ENCODE measurements at regions of chr18 and their contacts with region 1.

Region 1: DNA sequence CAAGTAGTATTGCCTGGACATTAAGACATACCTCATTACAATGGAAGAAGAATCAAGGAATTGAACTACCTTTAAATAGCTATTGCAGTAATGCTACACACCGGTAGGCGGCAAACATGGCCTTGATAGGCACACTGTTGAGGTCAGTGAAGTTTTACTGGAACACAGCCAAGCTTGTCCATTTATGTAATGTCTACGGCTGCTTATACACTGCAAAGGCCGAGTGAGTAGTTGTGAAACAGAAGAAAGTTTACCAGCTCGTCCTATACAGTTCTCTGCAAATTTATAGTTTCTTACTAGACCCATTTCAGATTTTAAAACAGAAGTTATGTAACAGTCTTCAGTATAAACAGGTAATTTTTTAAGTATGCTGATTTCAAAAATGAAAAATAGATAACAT is 38.8 kb downstream of the PPP4R1 start:
- DNase-seq: peak; percentile 84
- H3K4me3 Mint-ChIP-seq: no peak overlapping the region
- H3K27ac Mint-ChIP-seq: peak overlapping the region; percentile 42
- H3K4me1 Mint-ChIP-seq: peaks cover 12% of the 10 kb centered on the region
- H3K27me3 Mint-ChIP-seq: no peaks in the 10 kb centered on the region
- CTCF ChIP-seq: peak; percentile 84

Region 2: DNA sequence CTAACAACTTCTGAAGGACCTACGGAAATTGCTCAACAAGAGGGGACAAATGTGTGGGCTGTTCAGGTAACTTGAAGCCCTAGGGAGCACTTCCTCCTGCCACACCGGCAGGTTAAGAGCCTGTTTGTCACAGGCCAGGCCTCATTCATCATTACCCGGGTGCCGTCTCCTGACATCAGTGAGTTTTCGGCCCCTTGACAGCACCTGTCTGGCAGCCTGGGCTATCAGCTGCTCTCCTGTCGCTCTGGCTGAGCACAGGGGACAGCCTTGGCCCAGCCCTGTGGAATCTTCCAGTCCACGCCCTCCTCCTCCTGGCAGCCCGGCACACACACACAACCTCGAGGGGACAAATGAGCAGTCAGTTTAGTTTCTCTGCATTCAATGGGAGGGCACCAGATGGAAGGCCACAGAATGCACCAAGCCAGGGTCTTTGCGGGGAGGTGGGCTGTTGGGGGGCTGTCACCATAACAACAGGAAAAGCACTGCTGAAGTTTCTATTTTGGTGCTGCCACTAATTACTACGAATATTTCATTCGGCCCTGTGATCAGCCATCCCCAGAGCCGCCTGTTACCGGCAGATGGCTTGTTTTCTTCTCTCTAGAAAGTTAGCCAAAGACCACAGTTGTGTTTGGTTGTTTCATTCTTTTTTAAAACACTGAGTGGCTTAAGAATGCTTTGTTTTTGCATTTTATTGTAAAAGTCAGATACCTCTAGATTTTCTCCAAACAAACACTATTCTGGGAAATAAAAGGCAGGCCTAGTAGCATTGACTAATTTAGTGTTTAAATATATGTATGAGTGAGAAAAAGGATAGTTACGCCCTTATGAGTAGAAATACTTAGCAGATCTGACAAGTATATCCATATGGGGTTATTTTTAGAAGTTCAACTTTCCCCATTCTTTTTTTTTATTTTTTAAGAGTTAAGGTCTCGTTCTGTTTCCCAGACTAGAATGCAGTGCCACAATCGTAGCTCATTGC is 662.9 kb before region 1 on chr18:
- CTCF ChIA-PET with region 1: no interaction called
- intact Hi-C with region 1: no loop called
- DNase-seq: peak; percentile 47
- H3K4me3 Mint-ChIP-seq: no peak overlapping the region
- H3K27ac Mint-ChIP-seq: peak overlapping the region; percentile 20
- H3K4me1 Mint-ChIP-seq: peaks cover 21% of the 10 kb centered on the region
- H3K27me3 Mint-ChIP-seq: no peaks in the 10 kb centered on the region
- CTCF ChIP-seq: no peak

Region 3: GRCh38 chr18:9722691-9723090 is 147.1 kb after region 1 on chr18:
- CTCF ChIA-PET with region 1: interaction called, 5 read pairs
- intact Hi-C with region 1: loop called (anchors 2 kb)
- DNase-seq: peak; percentile 72
- H3K4me3 Mint-ChIP-seq: no peak overlapping the region
- H3K27ac Mint-ChIP-seq: no peak overlapping the region
- H3K4me1 Mint-ChIP-seq: peaks cover 18% of the 10 kb centered on the region
- H3K27me3 Mint-ChIP-seq: peaks cover 15% of the 10 kb centered on the region
- CTCF ChIP-seq: peak; percentile 56

Measured in Calu3 (cell line).